Mammary epithelial cell (primary cell): ENCODE measurements at regions of chr12 and their contacts with region 1.

Region 1: DNA sequence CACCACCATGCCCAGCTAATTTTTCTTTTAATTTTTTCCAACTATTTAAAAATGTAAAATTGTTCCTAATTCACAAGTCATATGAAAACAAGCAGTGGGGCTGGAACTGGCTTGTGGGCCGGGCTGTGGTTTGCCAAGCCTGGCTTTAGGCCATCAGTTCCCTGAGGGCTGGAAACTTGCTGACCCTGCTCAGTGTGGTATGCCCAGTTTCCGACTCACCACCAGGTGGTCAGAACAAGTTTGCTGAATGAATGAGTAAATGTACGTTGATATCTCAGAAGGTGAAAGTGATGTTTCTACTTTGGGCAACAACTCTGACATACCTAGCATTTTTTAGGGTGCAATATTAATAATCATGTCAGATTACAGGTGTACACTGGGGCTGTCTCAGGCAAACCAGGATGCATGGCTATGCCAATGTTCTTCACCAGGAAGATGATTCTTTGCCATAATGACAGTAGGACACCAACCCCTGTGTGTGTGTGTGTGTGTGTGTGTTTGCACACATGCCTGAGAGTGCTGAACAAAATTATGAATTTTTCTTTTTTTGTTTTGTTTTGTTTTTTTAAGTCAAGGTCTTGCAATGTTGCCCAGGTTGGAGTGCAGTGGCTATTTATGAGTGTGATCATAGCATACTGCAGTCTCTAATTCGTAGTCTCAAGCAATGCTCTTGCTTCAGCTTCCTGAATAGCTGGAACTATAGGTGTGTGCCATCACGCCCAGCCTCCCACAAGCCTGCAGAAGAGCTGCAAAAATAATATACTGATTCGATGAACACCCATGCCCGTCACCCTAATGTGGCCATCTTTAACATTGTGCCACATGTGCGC is 106.1 kb downstream of the PTPN11 start:
- DNase-seq: peak; percentile 79
- H3K4me3 ChIP-seq: no peak overlapping the region
- H3K27ac ChIP-seq: no peak overlapping the region
- H3K4me1 ChIP-seq: peaks cover 9% of the 10 kb centered on the region
- H3K27me3 ChIP-seq: no peaks in the 10 kb centered on the region
- CTCF ChIP-seq: peak; percentile 33 to 48

Region 2: GRCh38 chr12:112616469-112617152 is 91.7 kb after region 1 on chr12:
- CTCF ChIA-PET with region 1: no interaction called
- dilution Hi-C with region 1: loop called (anchors 5 kb)
- in situ Hi-C with region 1: no loop called
- intact Hi-C with region 1: no loop called
- DNase-seq: no peak
- H3K4me3 ChIP-seq: no peak overlapping the region
- H3K27ac ChIP-seq: no peak overlapping the region
- H3K4me1 ChIP-seq: no peaks in the 10 kb centered on the region
- H3K27me3 ChIP-seq: peaks cover 2% of the 10 kb centered on the region
- CTCF ChIP-seq: no peak

Region 3: DNA sequence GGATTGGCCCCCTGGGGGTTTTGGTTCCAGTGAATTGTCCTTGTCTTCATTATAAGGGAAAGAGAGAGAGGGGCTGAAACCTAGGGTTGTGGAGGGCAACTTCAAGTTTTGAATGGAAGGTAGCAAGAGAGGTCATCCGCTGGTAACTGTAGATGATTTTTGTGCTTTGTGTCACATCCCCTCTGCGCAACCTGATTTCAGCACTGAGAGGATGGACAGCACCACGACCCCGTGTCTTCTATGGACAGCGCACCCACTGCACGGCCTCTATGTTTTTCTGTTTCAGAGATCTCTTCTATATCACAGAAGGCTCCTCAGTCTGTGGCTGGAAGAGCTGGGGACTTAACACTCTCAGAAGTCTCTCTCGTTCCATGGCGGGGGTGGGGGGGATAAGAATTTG is 139.7 kb after region 1 on chr12:
- CTCF ChIA-PET with region 1: no interaction called
- dilution Hi-C with region 1: no loop called
- in situ Hi-C with region 1: no loop called
- intact Hi-C with region 1: no loop called
- DNase-seq: no peak
- H3K4me3 ChIP-seq: no peak overlapping the region
- H3K27ac ChIP-seq: no peak overlapping the region
- H3K4me1 ChIP-seq: no peaks in the 10 kb centered on the region
- H3K27me3 ChIP-seq: peaks cover 4% of the 10 kb centered on the region
- CTCF ChIP-seq: no peak

Region 4: GRCh38 chr12:112705037-112705661 is 180.3 kb after region 1 on chr12:
- CTCF ChIA-PET with region 1: no interaction called
- dilution Hi-C with region 1: no loop called
- in situ Hi-C with region 1: no loop called
- intact Hi-C with region 1: no loop called
- DNase-seq: peak; percentile 3
- H3K4me3 ChIP-seq: no peak overlapping the region
- H3K27ac ChIP-seq: no peak overlapping the region
- H3K4me1 ChIP-seq: no peaks in the 10 kb centered on the region
- H3K27me3 ChIP-seq: no peaks in the 10 kb centered on the region
- CTCF ChIP-seq: no peak

Region 5: GRCh38 chr12:112950701-112951100 is 425.8 kb after region 1 on chr12:
- CTCF ChIA-PET with region 1: no interaction called
- dilution Hi-C with region 1: no loop called
- in situ Hi-C with region 1: no loop called
- intact Hi-C with region 1: no loop called
- DNase-seq: no peak
- H3K4me3 ChIP-seq: no peak overlapping the region
- H3K27ac ChIP-seq: no peak overlapping the region
- H3K4me1 ChIP-seq: no peaks in the 10 kb centered on the region
- H3K27me3 ChIP-seq: no peaks in the 10 kb centered on the region
- CTCF ChIP-seq: no peak